CD4-positive, alpha-beta T cell (primary cell): ENCODE measurements at regions of chr7 and their contacts with region 1.

Region 1: DNA sequence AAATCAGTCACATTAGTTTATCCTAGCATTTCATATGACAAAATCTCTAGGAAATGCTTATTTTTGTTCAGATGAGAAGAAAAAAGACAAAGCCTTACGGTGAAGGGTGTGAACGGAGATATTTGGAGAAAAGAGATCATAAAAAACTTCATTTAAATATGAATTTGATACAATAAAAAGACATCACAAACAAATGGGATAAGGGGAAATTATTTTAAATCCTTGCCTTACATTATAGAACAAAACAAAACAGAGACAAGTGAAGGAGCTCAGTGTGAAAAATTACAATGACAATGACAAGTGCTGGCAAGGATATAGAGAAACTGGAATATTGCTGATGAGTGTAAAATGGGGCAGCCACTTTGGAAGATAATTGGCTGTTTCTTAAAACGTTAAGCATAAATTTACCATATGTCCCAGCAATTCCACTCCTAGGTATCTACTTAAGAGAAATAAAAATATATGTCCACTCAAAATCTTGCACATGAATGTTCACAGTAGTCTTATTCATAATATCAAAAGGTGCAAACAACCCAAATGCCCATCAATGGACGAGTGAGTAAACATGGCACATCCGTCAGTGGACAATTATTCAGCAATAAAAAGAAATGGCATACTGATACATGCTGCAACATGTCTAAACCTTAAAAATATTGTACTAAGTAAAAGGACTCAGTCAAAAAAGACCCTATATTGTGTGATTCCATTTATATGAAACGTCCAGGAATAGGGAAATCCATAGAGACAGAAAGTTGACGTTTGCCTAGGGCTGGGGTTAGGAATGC is 66.1 kb upstream of the RAPGEF5 start:
- DNase-seq: no peak
- ATAC-seq: no peak
- H3K4me3 ChIP-seq: no peak overlapping the region
- H3K4me3 Mint-ChIP-seq: no peak overlapping the region
- H3K27ac ChIP-seq: no peak overlapping the region
- H3K27ac Mint-ChIP-seq: no peak overlapping the region
- H3K4me1 ChIP-seq: no peaks in the 10 kb centered on the region
- H3K4me1 Mint-ChIP-seq: no peaks in the 10 kb centered on the region
- H3K27me3 ChIP-seq: no peaks in the 10 kb centered on the region
- H3K27me3 Mint-ChIP-seq: no peaks in the 10 kb centered on the region
- CTCF ChIP-seq: no peak

Region 2: DNA sequence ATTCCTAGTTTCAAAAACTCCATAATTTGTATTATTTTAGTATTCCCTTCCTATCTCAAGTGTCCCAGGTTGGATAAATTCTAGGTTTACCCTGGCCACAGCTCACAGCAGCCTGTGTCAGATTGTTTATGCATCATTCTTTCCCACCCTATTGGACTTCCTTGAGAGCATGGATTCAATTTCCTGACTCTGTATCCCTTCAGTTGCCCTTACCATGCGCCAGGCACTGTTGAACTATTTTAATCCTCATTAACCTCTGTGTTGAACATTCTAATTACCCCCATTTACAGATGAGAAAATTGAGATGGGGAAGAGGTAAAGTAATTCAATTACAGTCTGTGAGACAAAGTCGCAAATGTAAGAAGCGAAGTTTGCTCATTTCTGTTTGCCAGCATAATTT is 18.1 kb after region 1 on chr7:
- CTCF ChIA-PET with region 1: no interaction called
- POLR2A ChIA-PET with region 1: no interaction called
- intact Hi-C with region 1: loop called in 1 of 2 experiments (anchors 1 kb)
- DNase-seq: no peak
- ATAC-seq: no peak
- H3K4me3 ChIP-seq: no peak overlapping the region
- H3K4me3 Mint-ChIP-seq: no peak overlapping the region
- H3K27ac ChIP-seq: no peak overlapping the region
- H3K27ac Mint-ChIP-seq: no peak overlapping the region
- H3K4me1 ChIP-seq: peaks cover 5% of the 10 kb centered on the region
- H3K4me1 Mint-ChIP-seq: no peaks in the 10 kb centered on the region
- H3K27me3 ChIP-seq: no peaks in the 10 kb centered on the region
- H3K27me3 Mint-ChIP-seq: no peaks in the 10 kb centered on the region
- CTCF ChIP-seq: no peak